ENCODE measurements at regions of chr7 and their contacts with region 1.

Region 1: GRCh38 chr7:78895393-78895792 is 558.1 kb downstream of the MAGI2 start:
- DNase-seq: no peak
- ATAC-seq: no peak
- H3K4me3 ChIP-seq: no peak overlapping the region
- H3K4me3 Mint-ChIP-seq: no peak overlapping the region
- H3K27ac ChIP-seq: no peak overlapping the region
- H3K27ac Mint-ChIP-seq: no peak overlapping the region
- H3K4me1 ChIP-seq: no peaks in the 10 kb centered on the region
- H3K4me1 Mint-ChIP-seq: no peaks in the 10 kb centered on the region
- H3K27me3 ChIP-seq: no peaks in the 10 kb centered on the region
- H3K27me3 Mint-ChIP-seq: no peaks in the 10 kb centered on the region
- CTCF ChIP-seq: no peak

Region 2: DNA sequence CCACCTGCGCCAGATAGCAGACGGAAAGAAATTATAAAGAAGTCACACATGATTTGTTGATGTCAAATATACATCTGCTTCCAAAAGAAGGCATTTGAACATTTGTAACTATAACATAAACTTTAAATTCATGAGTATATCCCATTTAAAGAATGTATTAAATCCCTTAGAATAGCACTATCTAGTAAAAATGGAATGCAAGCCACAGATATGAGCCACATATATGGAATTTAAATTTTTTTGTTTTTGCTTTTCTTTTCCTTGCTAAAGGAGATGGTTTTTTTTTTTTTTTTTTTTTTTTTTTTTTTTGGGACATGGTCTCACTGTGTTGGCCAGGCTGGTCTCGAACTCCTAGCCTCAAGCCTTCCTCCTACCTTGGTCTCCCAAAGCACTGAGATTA is 366.0 kb before region 1 on chr7:
- CTCF ChIA-PET with region 1: no interaction called
- POLR2A ChIA-PET with region 1: no interaction called
- intact Hi-C with region 1: loop called in 1 of 2 experiments (anchors 5 kb)
- DNase-seq: no peak
- ATAC-seq: no peak
- H3K4me3 ChIP-seq: no peak overlapping the region
- H3K4me3 Mint-ChIP-seq: no peak overlapping the region
- H3K27ac ChIP-seq: no peak overlapping the region
- H3K27ac Mint-ChIP-seq: no peak overlapping the region
- H3K4me1 ChIP-seq: no peaks in the 10 kb centered on the region
- H3K4me1 Mint-ChIP-seq: no peaks in the 10 kb centered on the region
- H3K27me3 ChIP-seq: no peaks in the 10 kb centered on the region
- H3K27me3 Mint-ChIP-seq: no peaks in the 10 kb centered on the region
- CTCF ChIP-seq: no peak

Region 3: DNA sequence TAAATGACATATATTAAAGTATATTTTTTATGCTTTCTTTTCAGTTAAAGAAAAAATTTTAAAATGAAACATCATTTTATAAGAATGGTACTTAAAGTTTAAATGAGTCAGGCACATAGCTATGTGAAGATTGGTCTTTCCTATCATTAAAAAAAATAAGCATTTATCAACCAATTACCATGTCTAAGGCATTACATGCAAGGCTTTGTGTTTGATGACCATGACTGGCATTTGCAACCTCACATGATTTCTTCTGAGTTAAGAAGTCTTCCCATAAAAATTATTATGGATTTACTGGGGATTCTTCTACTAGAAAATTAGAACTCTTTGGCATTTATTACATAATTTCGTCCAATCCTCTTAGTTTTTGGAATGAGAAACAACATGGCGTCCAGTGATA is 218.0 kb before region 1 on chr7:
- CTCF ChIA-PET with region 1: no interaction called
- POLR2A ChIA-PET with region 1: no interaction called
- intact Hi-C with region 1: no loop called
- DNase-seq: no peak
- ATAC-seq: no peak
- H3K4me3 ChIP-seq: no peak overlapping the region
- H3K4me3 Mint-ChIP-seq: no peak overlapping the region
- H3K27ac ChIP-seq: no peak overlapping the region
- H3K27ac Mint-ChIP-seq: no peak overlapping the region
- H3K4me1 ChIP-seq: no peaks in the 10 kb centered on the region
- H3K4me1 Mint-ChIP-seq: no peaks in the 10 kb centered on the region
- H3K27me3 ChIP-seq: no peaks in the 10 kb centered on the region
- H3K27me3 Mint-ChIP-seq: no peaks in the 10 kb centered on the region
- CTCF ChIP-seq: no peak

Region 4: GRCh38 chr7:78863281-78863680 is 32.1 kb before region 1 on chr7:
- CTCF ChIA-PET with region 1: no interaction called
- POLR2A ChIA-PET with region 1: no interaction called
- intact Hi-C with region 1: no loop called
- DNase-seq: no peak
- ATAC-seq: no peak
- H3K4me3 ChIP-seq: no peak overlapping the region
- H3K4me3 Mint-ChIP-seq: no peak overlapping the region
- H3K27ac ChIP-seq: no peak overlapping the region
- H3K27ac Mint-ChIP-seq: no peak overlapping the region
- H3K4me1 ChIP-seq: no peaks in the 10 kb centered on the region
- H3K4me1 Mint-ChIP-seq: no peaks in the 10 kb centered on the region
- H3K27me3 ChIP-seq: no peaks in the 10 kb centered on the region
- H3K27me3 Mint-ChIP-seq: no peaks in the 10 kb centered on the region
- CTCF ChIP-seq: no peak

Measured in CD4-positive, alpha-beta T cell (primary cell).